ENCODE measurements at regions of chr12 and their contacts with region 1.

Region 1: GRCh38 chr12:62435303-62436163 is 31.1 kb upstream of the MON2 start:
- DNase-seq: peak; percentile 68
- H3K4me3 Mint-ChIP-seq: peak overlapping the region; percentile 76
- H3K27ac Mint-ChIP-seq: no peak overlapping the region
- H3K4me1 Mint-ChIP-seq: peaks cover 11% of the 10 kb centered on the region
- H3K27me3 Mint-ChIP-seq: peaks cover 30% of the 10 kb centered on the region

Region 2: GRCh38 chr12:62192180-62192902 is 243.2 kb before region 1 on chr12:
- CTCF ChIA-PET with region 1: interaction called, 4 read pairs
- intact Hi-C with region 1: loop called (anchors 5 kb)
- DNase-seq: peak; percentile 65
- H3K4me3 Mint-ChIP-seq: peak overlapping the region; percentile 78
- H3K27ac Mint-ChIP-seq: no peak overlapping the region
- H3K4me1 Mint-ChIP-seq: peaks cover 14% of the 10 kb centered on the region
- H3K27me3 Mint-ChIP-seq: peaks cover 36% of the 10 kb centered on the region

Region 3: GRCh38 chr12:62466594-62467491 is 31.3 kb after region 1 on chr12 and contains the start of gene MON2:
- CTCF ChIA-PET with region 1: interaction called, 24 read pairs
- intact Hi-C with region 1: loop called (anchors 1 kb)
- DNase-seq: peak; percentile 87
- H3K4me3 Mint-ChIP-seq: peak within 1 kb of the TSS; percentile 74
- H3K27ac Mint-ChIP-seq: peak within 1 kb of the TSS; percentile 88
- H3K4me1 Mint-ChIP-seq: peaks cover 15% of the 10 kb centered on the region
- H3K27me3 Mint-ChIP-seq: no peaks in the 10 kb centered on the region
- total RNA-seq, gene MON2: 29.2 to 29.8 TPM

Region 4: GRCh38 chr12:62581288-62582064 is 145.9 kb after region 1 on chr12:
- CTCF ChIA-PET with region 1: interaction called, 14 read pairs
- intact Hi-C with region 1: loop called (anchors 2 kb)
- DNase-seq: no peak
- H3K4me3 Mint-ChIP-seq: no peak overlapping the region
- H3K27ac Mint-ChIP-seq: no peak overlapping the region
- H3K4me1 Mint-ChIP-seq: no peaks in the 10 kb centered on the region
- H3K27me3 Mint-ChIP-seq: no peaks in the 10 kb centered on the region

Region 5: GRCh38 chr12:62631471-62632410 is 196.2 kb after region 1 on chr12:
- CTCF ChIA-PET with region 1: no interaction called
- intact Hi-C with region 1: loop called (anchors 5 kb)
- DNase-seq: peak; percentile 61
- H3K4me3 Mint-ChIP-seq: peak overlapping the region; percentile 67
- H3K27ac Mint-ChIP-seq: no peak overlapping the region
- H3K4me1 Mint-ChIP-seq: peaks cover 7% of the 10 kb centered on the region
- H3K27me3 Mint-ChIP-seq: peaks cover 74% of the 10 kb centered on the region

Region 6: GRCh38 chr12:62799126-62799736 is 363.7 kb after region 1 on chr12:
- CTCF ChIA-PET with region 1: interaction called, 137 read pairs
- intact Hi-C with region 1: loop called (anchors 1 kb)
- DNase-seq: peak; percentile 71
- H3K4me3 Mint-ChIP-seq: no peak overlapping the region
- H3K27ac Mint-ChIP-seq: no peak overlapping the region
- H3K4me1 Mint-ChIP-seq: no peaks in the 10 kb centered on the region
- H3K27me3 Mint-ChIP-seq: no peaks in the 10 kb centered on the region

Region 7: DNA sequence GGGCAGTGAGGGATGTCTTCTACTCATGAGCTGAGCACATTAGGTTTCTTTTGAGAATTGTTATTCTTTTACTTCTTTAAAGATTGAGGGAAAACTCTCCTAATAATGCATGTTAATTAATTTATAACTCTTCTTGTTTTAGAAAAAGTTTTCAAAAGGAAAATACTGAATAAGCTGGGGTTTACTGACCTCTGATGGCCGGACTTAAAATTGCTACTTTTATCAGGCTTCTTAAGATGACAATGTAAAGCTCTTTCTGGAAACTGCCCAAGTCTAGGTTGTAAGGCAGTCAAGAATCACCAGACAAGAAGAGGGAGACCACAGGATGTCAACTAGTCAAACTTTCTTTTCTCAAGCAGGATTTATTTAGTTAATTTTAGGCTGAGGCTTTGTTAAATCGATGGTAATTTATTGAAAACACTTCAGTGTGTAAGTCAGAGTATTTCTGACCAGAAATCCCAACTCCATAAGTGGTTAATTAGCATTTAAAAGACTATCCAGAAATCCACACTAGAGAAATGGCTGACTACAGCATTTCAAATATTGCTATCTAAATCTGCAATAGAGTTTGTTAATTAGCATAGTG is 633.4 kb after region 1 on chr12:
- CTCF ChIA-PET with region 1: no interaction called
- intact Hi-C with region 1: loop called (anchors 10 kb)
- DNase-seq: no peak
- H3K4me3 Mint-ChIP-seq: no peak overlapping the region
- H3K27ac Mint-ChIP-seq: no peak overlapping the region
- H3K4me1 Mint-ChIP-seq: no peaks in the 10 kb centered on the region
- H3K27me3 Mint-ChIP-seq: peaks cover 2% of the 10 kb centered on the region

Measured in activated naive CD4-positive, alpha-beta T cell treated with anti-CD3 and anti-CD28 coated beads for 36 hours (primary cell).